ENCODE measurements at regions of chr12 and their contacts with region 1.

Region 1: DNA sequence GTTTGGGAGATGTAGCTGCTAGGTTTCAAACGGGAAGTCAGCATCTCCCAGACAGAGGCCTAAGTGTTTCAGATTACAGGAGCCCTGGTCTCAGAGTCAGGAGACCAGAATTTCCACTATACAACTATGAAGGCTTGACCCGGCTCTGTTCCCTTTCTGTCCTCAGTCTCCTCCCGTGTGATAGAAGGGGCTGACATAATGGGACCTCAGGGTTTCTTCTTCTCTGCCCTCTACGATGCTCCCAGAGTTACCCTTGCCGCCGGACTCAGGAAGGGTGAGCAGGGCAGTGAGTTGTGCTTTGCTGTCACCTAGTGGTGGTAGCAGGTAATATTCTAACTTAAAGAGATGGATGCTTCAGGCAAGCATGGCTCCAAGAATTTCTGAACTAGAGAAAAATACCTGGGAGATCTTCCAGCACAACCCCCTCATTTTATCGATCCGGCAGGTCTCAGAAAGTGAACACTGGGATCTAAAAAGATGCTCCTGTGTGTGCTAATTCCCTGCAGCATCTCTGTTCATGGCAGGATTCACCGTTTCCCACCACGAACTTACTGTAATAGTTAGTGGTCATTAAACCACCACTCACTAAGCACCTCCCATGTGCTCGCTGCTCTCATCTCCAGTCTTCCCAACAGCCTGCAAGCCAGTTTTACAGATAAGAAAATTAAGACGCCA is 84.4 kb downstream of the VWF start:
- DNase-seq: peak; percentile 74
- H3K4me3 Mint-ChIP-seq: no peak overlapping the region
- H3K27ac Mint-ChIP-seq: no peak overlapping the region
- H3K4me1 Mint-ChIP-seq: peaks cover 10% of the 10 kb centered on the region
- H3K27me3 Mint-ChIP-seq: no peaks in the 10 kb centered on the region
- CTCF ChIP-seq: peak; percentile 89

Region 2: GRCh38 chr12:5973461-5974130 is 66.4 kb before region 1 on chr12:
- CTCF ChIA-PET with region 1: interaction called, 19 read pairs
- POLR2A ChIA-PET with region 1: interaction called, 3 read pairs
- intact Hi-C with region 1: no loop called
- DNase-seq: no peak
- H3K4me3 Mint-ChIP-seq: no peak overlapping the region
- H3K27ac Mint-ChIP-seq: no peak overlapping the region
- H3K4me1 Mint-ChIP-seq: no peaks in the 10 kb centered on the region
- H3K27me3 Mint-ChIP-seq: peaks cover 77% of the 10 kb centered on the region
- CTCF ChIP-seq: no peak

Region 3: DNA sequence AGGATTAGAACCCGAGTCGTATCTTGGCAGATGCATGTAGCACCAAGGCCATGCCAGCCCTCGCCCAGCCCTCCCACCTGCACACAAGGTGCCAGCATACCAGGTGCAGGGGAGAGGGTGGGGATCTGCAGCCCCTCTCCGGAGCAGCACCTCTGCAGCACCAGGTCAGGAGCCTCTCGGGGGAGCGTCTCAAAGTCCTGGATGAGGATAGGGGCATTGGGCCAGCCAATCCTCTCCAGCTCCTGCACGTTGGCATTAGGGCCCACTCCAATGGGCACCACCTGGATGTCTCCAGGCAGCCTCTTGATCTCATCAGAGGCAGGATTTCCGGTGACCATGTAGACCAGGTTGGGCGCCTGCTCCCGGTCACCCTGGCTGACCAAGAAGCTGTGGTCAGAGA is 21.8 kb before region 1 on chr12:
- CTCF ChIA-PET with region 1: interaction called, 10 read pairs
- POLR2A ChIA-PET with region 1: no interaction called
- intact Hi-C with region 1: no loop called
- DNase-seq: no peak
- H3K4me3 Mint-ChIP-seq: no peak overlapping the region
- H3K27ac Mint-ChIP-seq: no peak overlapping the region
- H3K4me1 Mint-ChIP-seq: no peaks in the 10 kb centered on the region
- H3K27me3 Mint-ChIP-seq: peaks cover 20% of the 10 kb centered on the region
- CTCF ChIP-seq: no peak

Region 4: DNA sequence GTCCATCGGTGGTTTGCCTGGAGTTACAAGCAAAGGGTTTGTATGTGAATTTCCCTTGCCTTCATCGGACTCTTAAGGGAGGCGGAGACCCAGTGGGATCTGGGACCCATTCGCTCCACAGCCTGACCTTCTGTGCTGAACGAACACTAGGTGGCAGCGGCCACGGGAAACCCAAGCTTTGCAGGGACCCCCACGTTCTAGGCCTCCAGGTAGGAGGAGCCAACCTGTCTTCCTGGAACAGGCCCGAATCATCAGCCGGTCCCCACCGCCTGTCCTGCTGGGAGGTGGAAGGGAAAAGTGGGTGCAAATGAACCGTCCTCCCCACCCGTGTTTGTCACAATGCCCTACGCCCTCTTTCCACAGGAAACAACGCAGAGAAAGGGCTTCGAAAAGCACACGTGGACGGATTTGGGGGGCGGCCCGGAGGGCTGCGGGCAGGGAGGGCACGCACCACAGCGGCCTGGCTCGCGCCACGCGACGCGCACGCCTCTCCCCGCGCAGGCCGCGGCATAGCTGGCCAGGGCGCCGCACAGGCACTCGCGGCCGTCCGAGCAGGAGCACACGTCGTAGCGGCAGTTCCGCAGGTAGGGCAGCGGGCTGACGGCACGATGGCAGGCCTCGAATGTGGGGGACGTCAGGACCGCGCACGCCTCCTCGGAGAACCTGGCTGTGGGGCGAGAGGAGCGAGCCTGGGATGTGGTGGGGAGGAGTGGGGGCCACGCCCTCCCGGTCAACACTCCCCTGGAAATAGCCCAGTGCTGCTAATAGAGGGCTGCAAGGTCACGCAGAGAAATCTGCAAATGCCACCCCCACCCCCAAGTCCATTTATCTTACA is 16.6 kb after region 1 on chr12:
- CTCF ChIA-PET with region 1: interaction called, 20 read pairs
- POLR2A ChIA-PET with region 1: no interaction called
- intact Hi-C with region 1: no loop called
- DNase-seq: no peak
- H3K4me3 Mint-ChIP-seq: no peak overlapping the region
- H3K27ac Mint-ChIP-seq: no peak overlapping the region
- H3K4me1 Mint-ChIP-seq: no peaks in the 10 kb centered on the region
- H3K27me3 Mint-ChIP-seq: no peaks in the 10 kb centered on the region
- CTCF ChIP-seq: no peak

Region 5: DNA sequence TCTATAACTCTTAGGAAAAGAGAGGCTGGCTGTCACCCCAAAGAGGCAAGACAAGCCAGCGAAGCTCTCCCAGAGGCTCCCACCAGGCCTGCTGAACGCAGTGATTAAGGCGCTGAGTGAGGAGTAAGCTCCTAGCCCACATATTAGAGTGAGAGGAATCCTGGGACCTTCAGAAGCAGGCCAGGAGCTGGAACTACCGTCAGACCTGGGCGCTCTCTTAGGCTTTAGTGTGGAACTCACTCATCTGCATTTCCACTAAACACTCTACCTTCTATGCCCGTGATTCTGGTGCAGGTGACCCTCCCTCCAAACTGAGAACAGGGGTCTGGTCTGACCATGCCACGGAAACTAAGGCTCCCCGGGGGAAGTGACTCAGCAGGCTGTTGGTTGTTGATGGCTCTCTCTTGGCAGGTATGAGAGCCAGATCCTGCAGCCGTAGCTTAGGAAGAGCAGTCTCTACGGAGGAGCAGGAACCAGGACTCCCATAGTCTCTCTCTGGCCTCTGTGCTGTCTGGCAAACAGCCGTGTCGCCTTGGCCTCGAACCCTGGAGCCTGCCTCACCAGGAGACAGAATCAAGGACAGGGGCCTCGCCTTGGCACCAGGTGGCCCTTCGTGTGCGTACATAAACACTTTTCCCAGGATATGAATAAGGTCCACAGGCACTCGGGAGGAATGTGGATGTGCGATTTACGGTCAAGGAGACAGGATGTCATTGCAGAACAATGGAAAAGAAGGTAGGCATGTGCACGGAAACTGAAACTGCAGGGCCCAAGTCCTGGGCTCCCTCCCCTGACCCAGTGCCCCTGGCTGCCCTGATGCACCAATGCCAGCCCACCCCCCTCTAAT is 76.4 kb after region 1 on chr12:
- CTCF ChIA-PET with region 1: no interaction called
- POLR2A ChIA-PET with region 1: no interaction called
- intact Hi-C with region 1: no loop called
- DNase-seq: peak; percentile 44
- H3K4me3 Mint-ChIP-seq: no peak overlapping the region
- H3K27ac Mint-ChIP-seq: no peak overlapping the region
- H3K4me1 Mint-ChIP-seq: peaks cover 8% of the 10 kb centered on the region
- H3K27me3 Mint-ChIP-seq: no peaks in the 10 kb centered on the region
- CTCF ChIP-seq: no peak

Measured in MCF 10A (cell line).